ENCODE measurements at regions of chr13 and their contacts with region 1.

Region 1: GRCh38 chr13:32309312-32310133 is 5.6 kb downstream of the ZAR1L start:
- DNase-seq: no peak
- H3K4me3 Mint-ChIP-seq: no peak overlapping the region
- H3K27ac Mint-ChIP-seq: no peak overlapping the region
- H3K4me1 Mint-ChIP-seq: peaks cover 24% of the 10 kb centered on the region
- H3K27me3 Mint-ChIP-seq: no peaks in the 10 kb centered on the region

Region 2: DNA sequence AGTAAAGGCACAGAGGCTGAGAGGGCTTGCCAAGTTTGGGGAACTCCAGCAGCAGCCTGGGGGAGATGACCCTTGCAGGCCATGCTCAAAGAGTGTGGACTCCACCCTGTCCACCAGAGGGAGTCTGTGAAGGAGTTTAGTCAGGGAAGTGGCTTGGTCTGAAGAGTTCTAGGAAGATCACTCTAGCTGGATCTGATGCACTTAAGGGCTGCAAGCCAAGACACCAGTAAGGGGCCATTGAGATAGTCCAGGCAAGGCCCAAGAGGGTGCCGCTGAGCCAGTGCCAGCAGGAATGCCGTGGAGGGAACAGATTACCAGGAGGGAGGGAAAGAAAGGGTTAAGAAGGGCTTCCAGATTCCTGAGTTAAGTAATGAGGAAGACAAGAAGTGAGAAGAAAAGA is 63.1 kb before region 1 on chr13:
- CTCF ChIA-PET with region 1: interaction called, 13 read pairs
- DNase-seq: peak; percentile 57
- H3K4me3 Mint-ChIP-seq: no peak overlapping the region
- H3K27ac Mint-ChIP-seq: no peak overlapping the region
- H3K4me1 Mint-ChIP-seq: no peaks in the 10 kb centered on the region
- H3K27me3 Mint-ChIP-seq: no peaks in the 10 kb centered on the region

Measured in activated naive CD4-positive, alpha-beta T cell treated with anti-CD3 and anti-CD28 coated beads, Interleukin-2, amount 10 ng/mL, durations not matched to agents 7 days and 5 days (primary cell).